Esophagus squamous epithelium (tissue), 5 donors: ENCODE measurements at regions of chr1 and their contacts with region 1.

Region 1: DNA sequence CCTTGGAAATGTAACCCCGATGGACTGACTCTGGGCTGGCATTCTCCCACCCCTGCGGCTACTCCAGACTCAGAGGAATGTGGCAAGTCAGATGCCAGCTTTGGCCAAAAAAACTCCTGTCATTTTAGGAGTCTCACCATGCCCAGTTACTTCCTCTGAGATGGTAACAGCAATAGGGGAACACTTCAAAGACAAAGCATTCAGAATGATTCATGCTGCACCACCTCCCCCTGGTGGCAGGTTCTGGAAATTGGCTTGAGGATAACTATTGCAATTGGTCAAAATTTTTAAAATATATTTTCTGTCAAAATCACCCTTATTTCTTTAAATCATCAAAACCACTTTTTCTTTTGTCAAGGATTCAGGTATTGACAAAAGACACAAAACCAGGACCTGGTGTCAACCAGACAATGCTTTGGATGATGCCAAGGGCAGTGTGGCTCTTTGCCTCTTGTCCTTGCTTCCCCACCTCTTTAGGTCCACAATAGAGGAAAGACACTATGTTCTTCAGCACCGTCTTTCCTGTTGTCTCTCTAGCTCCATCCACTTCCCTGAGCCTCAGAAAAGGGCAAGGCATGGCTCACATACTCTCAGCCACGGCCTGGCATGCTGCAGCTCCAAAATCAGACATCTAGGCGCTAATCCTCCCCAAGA is 9.9 kb upstream of the CDCA8 start:
- DNase-seq: peak; percentile 7
- H3K4me3 ChIP-seq: no peak overlapping the region
- H3K27ac ChIP-seq: no peak overlapping the region
- H3K4me1 ChIP-seq: no peaks in the 10 kb centered on the region
- H3K27me3 ChIP-seq: no peaks in the 10 kb centered on the region
- CTCF ChIP-seq: peak; percentile 77 to 90 (median 86)
- POLR2A ChIP-seq: no peak

Region 2: GRCh38 chr1:37449936-37450335 is 232.5 kb before region 1 on chr1:
- intact Hi-C with region 1: loop called (anchors 10 kb)
- DNase-seq: no peak
- H3K4me3 ChIP-seq: no peak overlapping the region
- H3K27ac ChIP-seq: no peak overlapping the region
- H3K4me1 ChIP-seq: peaks cover 0 to 5% (median 2%) of the 10 kb centered on the region in 3 donors
- H3K27me3 ChIP-seq: peaks cover 0 to 59% (median 2%) of the 10 kb centered on the region in 4 donors
- CTCF ChIP-seq: no peak
- POLR2A ChIP-seq: no peak

Region 3: DNA sequence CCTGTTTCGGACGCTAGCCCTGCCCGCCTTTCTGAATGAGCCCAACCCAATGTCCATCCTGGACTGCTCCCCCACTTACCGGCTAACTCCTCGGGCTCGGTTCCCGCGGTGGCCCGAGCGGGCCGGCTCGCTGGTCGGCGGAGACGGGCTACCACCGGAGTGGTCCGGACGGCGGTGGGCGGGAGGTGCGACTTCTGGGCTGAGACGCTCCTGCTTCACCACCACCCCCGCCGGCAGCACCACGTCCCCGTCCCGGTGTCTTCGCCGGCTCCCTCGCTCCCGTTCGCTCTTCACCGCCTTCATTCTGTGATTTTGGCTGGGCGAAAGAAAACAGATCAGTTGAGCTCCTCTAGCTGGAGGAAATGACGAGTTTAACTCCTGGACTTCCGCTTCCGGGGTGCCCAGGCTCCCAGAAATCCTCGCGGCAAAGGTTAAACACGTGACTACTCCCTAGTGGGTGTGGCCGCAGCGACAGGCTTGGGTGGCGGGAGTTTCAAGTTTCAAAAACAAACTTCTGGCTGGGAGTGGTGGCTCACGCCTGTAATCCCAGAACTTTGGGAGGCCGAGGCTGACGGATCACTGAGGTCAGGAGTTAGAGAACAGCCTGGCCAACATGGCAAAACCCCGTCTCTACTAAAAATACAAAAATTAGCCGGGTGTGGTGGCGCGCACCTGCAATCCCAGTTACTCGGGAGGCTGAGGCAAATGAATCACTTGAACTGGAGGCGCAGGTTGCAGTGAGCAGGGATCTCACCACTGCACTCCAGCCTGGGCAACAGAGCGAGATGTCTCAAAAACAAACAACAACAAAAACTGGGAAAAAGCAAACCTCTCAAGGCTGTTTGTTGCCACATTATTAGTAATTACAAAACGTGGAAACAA is 128.3 kb before region 1 on chr1 and contains the start of gene SNIP1:
- intact Hi-C with region 1: loop called (anchors 10 kb)
- DNase-seq: peak; percentile 59
- H3K4me3 ChIP-seq: peak within 1 kb of the TSS; percentile 88 to 95 (median 90)
- H3K27ac ChIP-seq: peak within 1 kb of the TSS; percentile 87 to 94 (median 91)
- H3K4me1 ChIP-seq: peaks cover 7 to 54% (median 23%) of the 10 kb centered on the region in 3 donors
- H3K27me3 ChIP-seq: no peaks in the 10 kb centered on the region
- CTCF ChIP-seq: peak in 1 of 6 experiments; percentile 36
- POLR2A ChIP-seq: peak in 3 of 4 donors; percentile 25 to 72 (median 66)
- total RNA-seq, gene SNIP1: 10.5 to 21.1 (median 13.1) TPM

Region 4: GRCh38 chr1:37602750-37603694 is 79.4 kb before region 1 on chr1:
- intact Hi-C with region 1: loop called (anchors 5 kb)
- DNase-seq: no peak
- H3K4me3 ChIP-seq: no peak overlapping the region
- H3K27ac ChIP-seq: no peak overlapping the region
- H3K4me1 ChIP-seq: peaks cover 0 to 25% (median 0%) of the 10 kb centered on the region in 3 donors
- H3K27me3 ChIP-seq: peaks cover 0 to 32% (median 0%) of the 10 kb centered on the region in 4 donors
- CTCF ChIP-seq: peak in 5 of 6 experiments; percentile 39 to 62 (median 48)
- POLR2A ChIP-seq: no peak

Region 5: DNA sequence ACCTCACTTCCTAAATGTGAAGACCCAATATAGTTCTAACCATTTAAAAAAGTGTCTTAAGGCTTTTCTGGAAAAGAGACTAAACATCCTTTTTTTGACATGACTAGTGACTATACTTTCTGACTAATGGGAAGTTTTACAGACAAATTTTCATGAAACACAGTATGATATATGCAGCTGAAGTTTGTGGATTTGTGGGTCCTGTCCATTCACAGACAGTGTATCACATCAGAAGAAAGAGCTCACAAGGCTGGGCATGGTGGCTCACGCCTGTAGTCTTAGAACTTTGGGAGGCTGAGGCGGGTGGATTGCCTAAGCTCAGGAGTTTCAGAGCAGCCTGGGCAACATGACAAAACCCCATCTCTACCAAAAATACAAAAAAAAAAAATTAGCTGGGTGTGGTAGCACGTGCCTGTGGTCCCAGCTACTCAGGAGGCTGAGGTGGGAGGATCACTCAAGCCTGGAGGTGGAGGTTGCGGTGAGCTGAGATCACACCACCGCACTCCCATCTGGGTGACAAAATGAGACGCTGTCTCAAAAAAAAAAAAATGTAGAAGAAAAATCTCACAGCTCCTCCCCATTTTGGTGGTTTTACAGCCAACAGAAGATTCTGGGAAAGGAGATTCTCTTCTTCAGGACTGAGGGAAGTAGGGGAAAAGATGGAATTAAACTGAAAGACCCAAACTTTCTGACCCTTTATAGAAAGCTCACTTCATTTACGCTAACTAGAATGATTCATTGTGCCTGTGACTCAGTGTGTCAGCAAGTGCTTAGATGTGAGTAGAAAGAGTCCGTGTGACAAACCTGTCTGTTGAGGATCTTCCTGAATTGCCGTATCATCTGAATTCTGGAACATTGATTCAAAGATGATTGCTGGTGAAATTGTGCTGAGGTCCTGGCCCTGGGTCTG is 140.7 kb after region 1 on chr1:
- intact Hi-C with region 1: no loop called
- DNase-seq: no peak
- H3K4me3 ChIP-seq: no peak overlapping the region
- H3K27ac ChIP-seq: peak overlapping the region in 2 of 4 donors; percentile 17 to 52
- H3K4me1 ChIP-seq: peaks cover 0 to 11% (median 0%) of the 10 kb centered on the region in 3 donors
- H3K27me3 ChIP-seq: no peaks in the 10 kb centered on the region
- CTCF ChIP-seq: no peak
- POLR2A ChIP-seq: no peak